PC-3 (cell line): ENCODE measurements at regions of chr2 and their contacts with region 1.

Region 1: GRCh38 chr2:212777020-212777491 is 238.5 kb upstream of the ERBB4 start:
- DNase-seq: peak; percentile 77
- ATAC-seq: peak; percentile 63
- H3K4me3 ChIP-seq: peak overlapping the region; percentile 45
- H3K27ac ChIP-seq: no peak overlapping the region
- H3K4me1 ChIP-seq: peaks cover 11% of the 10 kb centered on the region; the same call in 1 of the 2 replicates
- H3K27me3 ChIP-seq: no peaks in the 10 kb centered on the region
- CTCF ChIP-seq: peak; percentile 79

Region 2: GRCh38 chr2:212892193-212892592 is 115.1 kb after region 1 on chr2:
- CTCF ChIA-PET with region 1: interaction called, 18 read pairs
- POLR2A ChIA-PET with region 1: no interaction called
- intact Hi-C with region 1: loop called (anchors 1 kb)
- DNase-seq: peak; percentile 75
- ATAC-seq: peak; percentile 79
- H3K4me3 ChIP-seq: no peak overlapping the region
- H3K27ac ChIP-seq: no peak overlapping the region
- H3K4me1 ChIP-seq: no peaks in the 10 kb centered on the region
- H3K27me3 ChIP-seq: no peaks in the 10 kb centered on the region
- CTCF ChIP-seq: peak; percentile 81

Region 3: GRCh38 chr2:212940816-212941215 is 163.8 kb after region 1 on chr2:
- CTCF ChIA-PET with region 1: no interaction called
- POLR2A ChIA-PET with region 1: no interaction called
- intact Hi-C with region 1: loop called (anchors 1 kb)
- DNase-seq: peak; percentile 75
- ATAC-seq: peak; percentile 60
- H3K4me3 ChIP-seq: peak overlapping the region; percentile 9; the same call in 1 of the 2 replicates
- H3K27ac ChIP-seq: peak overlapping the region; percentile 71
- H3K4me1 ChIP-seq: peaks cover 26% of the 10 kb centered on the region
- H3K27me3 ChIP-seq: no peaks in the 10 kb centered on the region
- CTCF ChIP-seq: no peak